PC-3 (cell line): ENCODE measurements at regions of chr19 and their contacts with region 1.

Region 1: DNA sequence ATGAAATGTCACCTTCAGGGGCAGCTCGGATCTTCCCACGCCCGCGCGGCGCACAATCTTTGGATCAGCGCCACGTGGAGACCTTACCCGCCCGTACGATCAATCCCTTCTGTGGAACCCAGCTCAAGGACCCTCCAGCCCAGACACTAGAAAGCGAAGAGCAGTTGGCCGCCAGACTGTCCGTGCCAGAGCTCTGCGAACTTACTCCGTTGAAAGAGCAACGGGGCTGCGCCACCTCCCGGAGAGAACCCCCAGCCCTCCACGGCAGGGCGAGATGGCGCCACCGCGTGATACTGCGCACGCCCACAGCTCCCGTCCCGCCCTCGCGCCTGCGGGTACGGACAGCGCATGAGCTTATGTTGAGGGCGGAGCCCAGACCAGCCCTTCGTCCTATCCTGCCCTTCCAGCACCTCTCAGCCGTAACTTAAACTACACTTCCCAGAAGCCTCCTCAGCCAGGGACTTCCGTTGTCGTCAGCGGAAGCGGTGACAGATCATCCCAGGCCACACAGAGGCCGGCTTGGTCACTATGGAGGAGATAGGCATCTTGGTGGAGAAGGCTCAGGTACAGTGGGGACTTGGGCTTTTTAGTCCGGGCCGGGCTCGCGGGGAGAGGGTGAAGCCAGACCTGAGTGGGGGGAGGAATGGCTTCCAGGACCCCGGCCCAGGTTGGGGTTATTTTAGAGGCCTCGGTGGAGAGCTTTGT is at the start of gene PSMC4:
- DNase-seq: peak; percentile 97
- ATAC-seq: peak; percentile 99
- H3K4me3 ChIP-seq: peak within 1 kb of the TSS; percentile 88
- H3K27ac ChIP-seq: peak within 1 kb of the TSS; percentile 65
- H3K4me1 ChIP-seq: peaks cover 9% of the 10 kb centered on the region; the same call in 1 of the 2 replicates
- H3K27me3 ChIP-seq: no peaks in the 10 kb centered on the region
- CTCF ChIP-seq: peak; percentile 66
- total RNA-seq, gene PSMC4: 241 and 258 TPM in 2 replicates

Region 2: GRCh38 chr19:39792999-39793546 is 177.8 kb before region 1 on chr19:
- CTCF ChIA-PET with region 1: interaction called, 11 read pairs
- POLR2A ChIA-PET with region 1: no interaction called
- intact Hi-C with region 1: no loop called
- DNase-seq: peak; percentile 64
- ATAC-seq: peak; percentile 92
- H3K4me3 ChIP-seq: peak overlapping the region; percentile 67
- H3K27ac ChIP-seq: no peak overlapping the region
- H3K4me1 ChIP-seq: no peaks in the 10 kb centered on the region
- H3K27me3 ChIP-seq: peaks cover 24% of the 10 kb centered on the region
- CTCF ChIP-seq: peak; percentile 90

Region 3: DNA sequence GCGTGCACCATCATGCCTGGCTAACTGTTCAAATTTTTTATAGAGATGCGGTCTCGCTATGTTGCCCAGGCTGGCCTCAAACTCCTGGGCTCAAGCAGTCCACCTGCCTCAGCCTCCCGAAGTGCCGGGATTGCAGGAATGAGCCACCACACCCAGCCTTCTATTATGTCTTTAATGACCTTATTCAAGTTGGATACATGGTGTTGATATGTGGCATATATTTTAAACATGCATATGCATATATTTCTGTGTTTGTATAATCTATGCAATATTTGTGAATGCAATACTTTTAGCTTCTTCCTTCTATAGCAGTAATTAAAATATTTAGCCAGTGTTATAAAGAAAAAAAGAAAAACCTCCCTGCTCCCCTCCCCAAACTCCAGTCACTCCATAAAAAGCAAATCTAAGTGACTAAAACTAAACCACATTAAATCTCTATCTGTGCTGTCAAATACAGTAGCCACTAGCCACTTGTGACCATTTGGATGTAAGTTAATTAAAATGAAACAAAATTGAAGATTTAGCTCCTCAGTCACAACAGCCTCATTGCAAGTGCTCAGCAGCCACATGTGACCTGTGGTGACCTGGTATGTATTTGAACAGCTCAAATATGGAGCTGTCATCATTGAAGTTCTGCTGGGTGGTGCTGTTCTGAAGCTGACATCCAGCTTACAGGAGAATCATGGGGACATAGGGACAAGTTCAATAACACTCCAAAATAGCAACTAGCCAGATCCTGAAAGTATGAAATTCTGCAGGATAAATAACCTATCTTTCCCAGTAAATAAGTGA is 63.8 kb before region 1 on chr19:
- CTCF ChIA-PET with region 1: no interaction called
- POLR2A ChIA-PET with region 1: no interaction called
- intact Hi-C with region 1: loop called (anchors 10 kb)
- DNase-seq: no peak
- ATAC-seq: no peak
- H3K4me3 ChIP-seq: no peak overlapping the region
- H3K27ac ChIP-seq: no peak overlapping the region
- H3K4me1 ChIP-seq: peaks cover 3% of the 10 kb centered on the region; the same call in 1 of the 2 replicates
- H3K27me3 ChIP-seq: no peaks in the 10 kb centered on the region
- CTCF ChIP-seq: no peak

Region 4: DNA sequence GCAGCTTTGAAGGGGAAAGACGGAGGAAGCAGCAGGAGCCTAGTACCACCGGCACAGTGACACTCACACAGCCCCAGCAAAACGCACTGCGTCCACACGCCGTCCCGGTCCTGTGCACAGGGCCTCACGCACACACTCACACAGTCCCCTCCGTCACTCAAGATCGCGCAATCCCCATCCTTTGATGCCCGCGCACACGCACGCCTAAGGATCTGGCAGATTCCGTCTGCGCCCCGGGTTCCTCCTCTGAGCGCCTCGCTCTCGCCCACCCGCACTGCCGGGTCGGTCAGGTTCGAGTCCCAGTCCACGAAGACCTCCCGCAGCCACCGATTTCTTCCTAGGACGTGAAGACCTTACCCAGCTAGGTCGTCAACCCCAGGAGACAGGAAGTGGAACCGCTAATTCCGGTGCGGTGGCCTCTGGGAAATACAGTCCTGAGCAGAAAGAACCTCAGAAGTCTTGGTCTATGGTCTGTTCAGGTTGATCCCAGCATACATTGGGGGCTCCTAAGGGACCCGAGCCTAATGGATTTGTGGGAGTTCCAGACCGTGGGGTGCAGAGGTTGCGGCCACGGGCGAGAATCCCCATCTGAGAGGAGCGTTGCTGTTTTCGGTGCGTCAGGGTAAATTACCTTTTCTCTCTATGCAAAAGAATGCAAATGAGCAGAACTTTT is 85.1 kb after region 1 on chr19 and contains the start of gene ZNF780B:
- CTCF ChIA-PET with region 1: no interaction called
- POLR2A ChIA-PET with region 1: no interaction called
- intact Hi-C with region 1: loop called (anchors 2 kb)
- DNase-seq: peak; percentile 49
- ATAC-seq: peak; percentile 96
- H3K4me3 ChIP-seq: peak within 1 kb of the TSS; percentile 99
- H3K27ac ChIP-seq: 0 out of 2 replicates have a peak within 1 kb of the TSS, but pooled peaks have one; percentile 20
- H3K4me1 ChIP-seq: peaks cover 3% of the 10 kb centered on the region; the same call in 1 of the 2 replicates
- H3K27me3 ChIP-seq: no peaks in the 10 kb centered on the region
- CTCF ChIP-seq: no peak
- total RNA-seq, gene ZNF780B: 7.1 and 8.5 TPM in 2 replicates